Esophagus squamous epithelium (tissue), 5 donors: ENCODE measurements at regions of chr16 and their contacts with region 1.

Region 1: DNA sequence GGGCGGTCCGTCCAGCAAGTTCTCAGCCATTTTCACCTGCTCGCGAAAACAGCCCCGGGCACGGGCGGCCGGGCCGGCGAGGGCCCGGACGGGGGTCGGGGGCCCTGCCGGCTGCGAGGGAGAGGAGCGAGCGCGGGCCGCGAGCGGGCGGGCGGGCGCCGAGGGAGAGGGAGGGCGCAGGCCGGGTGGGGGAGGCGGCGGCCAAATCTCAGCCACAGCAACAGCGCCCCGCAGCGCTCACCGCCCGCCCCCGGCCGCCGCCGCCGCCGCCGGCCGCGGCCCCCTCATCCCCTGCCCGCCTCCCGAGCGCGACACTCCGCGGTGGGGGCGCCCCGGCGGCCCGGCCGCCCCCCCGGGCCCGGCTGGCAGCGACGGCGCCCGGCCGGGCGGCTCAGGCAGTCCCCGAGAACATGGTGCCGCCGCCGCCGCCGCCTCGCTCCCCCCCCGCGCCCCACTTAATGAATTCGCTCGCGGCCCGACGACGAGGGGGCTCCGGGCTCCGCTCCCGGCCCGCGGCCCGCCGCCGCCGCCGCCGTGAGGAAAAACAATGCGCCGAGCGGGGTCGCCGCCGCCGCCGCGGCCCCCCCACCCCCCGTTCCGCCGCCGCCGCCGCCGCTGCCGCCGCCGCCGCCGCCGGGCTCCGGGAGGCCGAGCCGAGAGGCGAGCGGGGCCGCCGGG is 487 bp downstream of the CREBBP start:
- DNase-seq: no peak
- H3K4me3 ChIP-seq: peak overlapping the region; percentile 94 to 98 (median 94)
- H3K27ac ChIP-seq: peak overlapping the region; percentile 87 to 99 (median 97)
- H3K4me1 ChIP-seq: peaks cover 8 to 52% (median 33%) of the 10 kb centered on the region in 3 donors
- H3K27me3 ChIP-seq: no peaks in the 10 kb centered on the region
- CTCF ChIP-seq: peak in 2 of 6 experiments; percentile 13 to 23
- POLR2A ChIP-seq: no peak

Region 2: GRCh38 chr16:3690470-3690928 is 189.5 kb before region 1 on chr16:
- intact Hi-C with region 1: loop called (anchors 5 kb)
- DNase-seq: peak; percentile 15
- H3K4me3 ChIP-seq: peak overlapping the region in 3 of 4 donors; percentile 28 to 59 (median 30)
- H3K27ac ChIP-seq: peak overlapping the region; percentile 46 to 80 (median 72)
- H3K4me1 ChIP-seq: peaks cover 7 to 20% (median 10%) of the 10 kb centered on the region in 3 donors
- H3K27me3 ChIP-seq: no peaks in the 10 kb centered on the region
- CTCF ChIP-seq: peak; percentile 92 to 95 (median 94)
- POLR2A ChIP-seq: no peak

Region 3: DNA sequence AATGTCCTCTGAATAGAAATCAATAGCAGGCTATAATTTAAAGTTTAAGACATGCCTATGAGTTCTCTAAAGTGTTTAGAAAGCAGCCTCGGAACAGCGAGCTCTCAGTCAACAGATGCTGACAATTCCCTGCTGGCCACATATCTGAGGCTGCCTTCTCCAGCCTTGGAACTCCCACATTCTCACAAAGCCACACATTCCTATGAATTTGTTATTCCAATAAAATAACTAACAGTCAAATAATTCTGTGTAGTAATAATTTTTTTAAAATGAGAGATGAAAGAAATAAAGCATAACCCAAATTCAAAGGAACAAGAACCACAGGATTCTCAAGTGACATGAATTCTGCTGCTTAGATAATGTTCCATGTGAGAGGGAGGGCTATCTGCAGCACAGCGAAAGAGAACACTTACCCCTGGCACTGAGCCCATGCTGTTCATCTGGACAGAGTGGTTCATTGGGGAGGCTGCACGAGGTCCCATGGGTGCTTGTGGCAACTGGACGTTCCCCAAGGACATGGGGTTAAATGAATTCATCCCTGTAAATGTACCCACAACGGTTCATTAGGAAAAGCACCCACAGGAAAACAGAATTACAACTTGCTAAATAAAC is 105.8 kb before region 1 on chr16:
- intact Hi-C with region 1: loop called (anchors 10 kb)
- DNase-seq: no peak
- H3K4me3 ChIP-seq: no peak overlapping the region
- H3K27ac ChIP-seq: no peak overlapping the region
- H3K4me1 ChIP-seq: peaks cover 0 to 14% (median 5%) of the 10 kb centered on the region in 3 donors
- H3K27me3 ChIP-seq: no peaks in the 10 kb centered on the region
- CTCF ChIP-seq: no peak
- POLR2A ChIP-seq: no peak